ENCODE measurements at regions of chr9 and their contacts with region 1.

Region 1: DNA sequence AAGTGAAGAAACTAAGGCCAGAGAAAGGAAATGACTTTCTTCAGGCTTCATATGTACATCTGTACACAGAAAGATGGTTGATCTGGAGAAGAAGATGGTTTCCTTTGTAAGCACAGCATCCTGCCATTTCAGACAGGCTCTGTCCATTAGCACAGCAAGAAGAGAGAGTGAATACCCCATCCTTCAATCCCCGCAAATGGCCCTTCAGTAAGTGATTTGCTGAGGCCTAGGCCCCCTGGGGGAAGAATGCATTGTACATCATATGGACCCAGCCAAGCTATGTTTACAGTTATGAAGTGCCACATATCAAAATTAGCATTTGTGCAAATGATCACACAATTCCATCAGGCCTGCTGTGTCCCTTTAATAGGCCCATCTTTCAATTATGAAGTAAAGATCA is 657.4 kb downstream of the BRINP1 start:
- DNase-seq: no peak
- H3K4me3 ChIP-seq: no peak overlapping the region
- H3K4me3 Mint-ChIP-seq: no peak overlapping the region
- H3K27ac ChIP-seq: no peak overlapping the region
- H3K27ac Mint-ChIP-seq: no peak overlapping the region
- H3K4me1 ChIP-seq: no peaks in the 10 kb centered on the region
- H3K4me1 Mint-ChIP-seq: no peaks in the 10 kb centered on the region
- H3K27me3 ChIP-seq: no peaks in the 10 kb centered on the region
- H3K27me3 Mint-ChIP-seq: no peaks in the 10 kb centered on the region

Region 2: DNA sequence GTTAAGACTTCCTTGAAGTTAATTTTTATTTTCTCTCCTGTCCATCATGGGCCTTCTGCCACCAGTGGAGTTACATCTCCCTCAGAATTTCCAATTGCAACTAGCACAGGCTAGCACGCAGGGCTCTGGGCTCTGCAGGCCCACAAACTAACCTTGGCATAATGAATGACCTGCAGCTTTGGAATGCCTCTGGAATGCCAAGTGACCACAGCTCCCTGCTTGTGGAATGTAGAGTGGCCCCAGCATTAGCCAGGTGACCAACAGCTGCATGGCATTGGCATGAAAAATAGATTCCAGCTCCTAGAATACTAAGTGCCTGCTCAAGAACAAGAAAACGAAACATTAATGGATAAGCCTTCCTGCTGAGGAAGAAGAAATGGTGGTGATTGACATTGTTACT is 68.7 kb before region 1 on chr9:
- CTCF ChIA-PET with region 1: no interaction called
- POLR2A ChIA-PET with region 1: no interaction called
- intact Hi-C with region 1: loop called (anchors 10 kb)
- DNase-seq: no peak
- H3K4me3 ChIP-seq: no peak overlapping the region
- H3K4me3 Mint-ChIP-seq: no peak overlapping the region
- H3K27ac ChIP-seq: no peak overlapping the region
- H3K27ac Mint-ChIP-seq: no peak overlapping the region
- H3K4me1 ChIP-seq: no peaks in the 10 kb centered on the region
- H3K4me1 Mint-ChIP-seq: no peaks in the 10 kb centered on the region
- H3K27me3 ChIP-seq: no peaks in the 10 kb centered on the region
- H3K27me3 Mint-ChIP-seq: no peaks in the 10 kb centered on the region

Region 3: DNA sequence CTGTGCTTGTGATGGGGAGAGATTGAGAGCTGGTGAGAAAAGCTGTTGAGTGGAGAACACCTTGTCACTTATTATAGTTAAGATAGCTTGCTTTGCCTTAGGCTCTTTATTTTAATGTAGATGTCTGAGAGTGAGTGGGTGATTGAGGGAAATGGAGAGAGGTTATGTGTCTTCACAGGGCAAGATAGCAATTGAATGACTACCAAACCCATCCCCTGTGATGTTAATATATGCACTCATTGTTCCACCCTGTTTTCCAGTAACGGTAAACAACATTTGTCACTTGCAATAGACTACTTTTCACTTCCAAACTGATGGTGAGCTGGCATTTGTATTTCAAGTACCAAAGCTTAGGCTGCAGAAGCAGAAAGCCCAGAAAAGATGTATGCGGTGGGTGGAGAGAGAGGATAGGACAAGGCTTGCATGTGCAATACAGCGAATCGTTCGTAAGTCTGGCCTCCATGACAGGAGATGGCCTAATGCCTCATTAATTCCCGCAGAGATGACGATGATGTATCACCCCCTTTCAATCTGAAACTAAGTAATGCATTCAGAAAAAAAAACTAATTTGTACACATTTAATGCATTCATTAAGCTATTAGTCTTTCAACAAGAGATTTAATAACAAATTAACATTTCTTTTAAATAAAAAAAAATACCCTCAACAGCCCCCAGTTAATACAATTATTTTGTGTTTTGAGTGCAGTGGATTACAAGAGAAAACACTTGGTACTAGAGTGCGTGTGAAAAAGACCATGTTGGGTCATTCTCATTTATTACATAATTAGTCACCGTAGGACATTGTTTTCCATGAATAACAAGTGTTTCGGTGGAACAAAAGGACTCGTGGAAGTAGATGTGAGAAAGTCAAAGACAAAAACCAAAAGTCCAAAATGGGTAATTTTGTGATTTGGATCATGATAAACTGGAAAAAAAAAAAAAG is 41.6 kb before region 1 on chr9:
- CTCF ChIA-PET with region 1: no interaction called
- POLR2A ChIA-PET with region 1: no interaction called
- intact Hi-C with region 1: no loop called
- DNase-seq: no peak
- H3K4me3 ChIP-seq: no peak overlapping the region
- H3K4me3 Mint-ChIP-seq: peak overlapping the region in 1 of 8 donors; percentile 49
- H3K27ac ChIP-seq: no peak overlapping the region
- H3K27ac Mint-ChIP-seq: no peak overlapping the region
- H3K4me1 ChIP-seq: no peaks in the 10 kb centered on the region
- H3K4me1 Mint-ChIP-seq: no peaks in the 10 kb centered on the region
- H3K27me3 ChIP-seq: no peaks in the 10 kb centered on the region
- H3K27me3 Mint-ChIP-seq: no peaks in the 10 kb centered on the region

Measured in CD4-positive, alpha-beta memory T cell (primary cell).